Activated CD4-positive, alpha-beta memory T cell treated with anti-CD3 and anti-CD28 coated beads for 36 hours (primary cell): ENCODE measurements at regions of chr2 and their contacts with region 1.

Region 1: GRCh38 chr2:234288974-234289455 is 207.9 kb downstream of the ARL4C start:
- DNase-seq: peak; percentile 87
- H3K4me3 Mint-ChIP-seq: peak overlapping the region; percentile 49
- H3K27ac Mint-ChIP-seq: peak overlapping the region; percentile 95
- H3K4me1 Mint-ChIP-seq: peaks cover 65% of the 10 kb centered on the region
- H3K27me3 Mint-ChIP-seq: no peaks in the 10 kb centered on the region

Region 2: GRCh38 chr2:234135720-234136221 is 153.2 kb before region 1 on chr2:
- CTCF ChIA-PET with region 1: interaction called, 29 read pairs
- POLR2A ChIA-PET with region 1: no interaction called
- intact Hi-C with region 1: loop called (anchors 2 kb)
- DNase-seq: peak; percentile 70
- H3K4me3 Mint-ChIP-seq: no peak overlapping the region
- H3K27ac Mint-ChIP-seq: no peak overlapping the region
- H3K4me1 Mint-ChIP-seq: peaks cover 22% of the 10 kb centered on the region
- H3K27me3 Mint-ChIP-seq: no peaks in the 10 kb centered on the region

Region 3: DNA sequence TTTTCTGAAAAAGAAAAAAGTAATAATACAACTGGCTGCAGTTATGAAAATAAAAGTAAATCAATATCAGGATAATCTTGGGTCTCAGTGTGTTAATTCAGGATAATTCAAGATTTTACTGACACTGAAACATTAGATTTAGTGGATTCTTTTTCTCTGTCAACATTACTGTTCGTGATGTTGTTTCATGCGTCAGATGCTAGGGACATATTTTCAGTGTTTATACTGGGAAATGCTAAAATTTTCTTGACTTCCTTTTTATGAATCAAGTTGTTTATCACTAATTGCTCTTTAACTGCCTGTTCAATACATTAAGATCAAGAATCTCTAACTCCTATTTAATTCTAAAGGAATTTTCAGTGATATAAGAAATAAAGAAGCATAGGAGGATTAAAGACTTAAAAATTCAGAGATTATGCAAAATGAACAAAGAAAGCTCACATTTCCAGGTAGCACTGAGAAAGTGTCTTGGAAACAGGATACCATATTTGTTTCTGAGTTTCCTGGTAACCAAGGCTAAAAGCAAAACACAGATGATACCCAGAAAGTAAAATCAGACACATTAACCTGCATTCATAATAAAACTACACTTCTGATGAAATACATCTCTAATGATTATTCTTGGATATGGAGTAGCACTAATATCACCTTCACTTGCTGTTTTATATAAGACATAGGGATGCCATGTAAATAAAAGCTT is 33.9 kb after region 1 on chr2:
- CTCF ChIA-PET with region 1: no interaction called
- POLR2A ChIA-PET with region 1: no interaction called
- intact Hi-C with region 1: loop called (anchors 1 kb)
- DNase-seq: no peak
- H3K4me3 Mint-ChIP-seq: no peak overlapping the region
- H3K27ac Mint-ChIP-seq: peak overlapping the region; percentile 60
- H3K4me1 Mint-ChIP-seq: peaks cover 32% of the 10 kb centered on the region
- H3K27me3 Mint-ChIP-seq: no peaks in the 10 kb centered on the region

Region 4: DNA sequence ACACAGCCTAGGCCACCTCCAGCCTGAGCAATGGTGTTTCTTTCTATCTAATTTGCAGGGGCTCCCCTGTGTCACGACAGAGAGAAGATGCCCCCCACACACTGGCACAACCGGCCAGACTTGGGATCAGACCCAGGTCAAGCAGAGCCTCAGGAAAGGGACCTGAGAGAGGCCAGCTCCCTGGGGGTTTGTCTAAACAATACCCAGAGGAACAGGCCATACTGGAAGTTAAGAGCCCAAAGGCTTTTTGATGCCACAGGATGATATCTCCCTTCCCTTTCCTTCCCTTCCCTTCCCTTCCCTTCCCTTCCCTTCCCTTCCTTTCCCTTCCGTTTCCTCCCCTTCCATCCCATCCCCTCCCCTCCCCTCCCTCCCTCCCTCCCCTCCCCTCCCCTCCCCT is 68.6 kb after region 1 on chr2:
- CTCF ChIA-PET with region 1: no interaction called
- POLR2A ChIA-PET with region 1: no interaction called
- intact Hi-C with region 1: no loop called
- DNase-seq: no peak
- H3K4me3 Mint-ChIP-seq: no peak overlapping the region
- H3K27ac Mint-ChIP-seq: no peak overlapping the region
- H3K4me1 Mint-ChIP-seq: peaks cover 11% of the 10 kb centered on the region
- H3K27me3 Mint-ChIP-seq: no peaks in the 10 kb centered on the region

Region 5: GRCh38 chr2:234446404-234447076 is 157.5 kb after region 1 on chr2:
- CTCF ChIA-PET with region 1: interaction called, 8 read pairs
- POLR2A ChIA-PET with region 1: interaction called, 7 read pairs
- intact Hi-C with region 1: loop called (anchors 1 kb)
- DNase-seq: peak; percentile 89
- H3K4me3 Mint-ChIP-seq: peak overlapping the region; percentile 66
- H3K27ac Mint-ChIP-seq: peak overlapping the region; percentile 95
- H3K4me1 Mint-ChIP-seq: peaks cover 73% of the 10 kb centered on the region
- H3K27me3 Mint-ChIP-seq: no peaks in the 10 kb centered on the region

Region 6: DNA sequence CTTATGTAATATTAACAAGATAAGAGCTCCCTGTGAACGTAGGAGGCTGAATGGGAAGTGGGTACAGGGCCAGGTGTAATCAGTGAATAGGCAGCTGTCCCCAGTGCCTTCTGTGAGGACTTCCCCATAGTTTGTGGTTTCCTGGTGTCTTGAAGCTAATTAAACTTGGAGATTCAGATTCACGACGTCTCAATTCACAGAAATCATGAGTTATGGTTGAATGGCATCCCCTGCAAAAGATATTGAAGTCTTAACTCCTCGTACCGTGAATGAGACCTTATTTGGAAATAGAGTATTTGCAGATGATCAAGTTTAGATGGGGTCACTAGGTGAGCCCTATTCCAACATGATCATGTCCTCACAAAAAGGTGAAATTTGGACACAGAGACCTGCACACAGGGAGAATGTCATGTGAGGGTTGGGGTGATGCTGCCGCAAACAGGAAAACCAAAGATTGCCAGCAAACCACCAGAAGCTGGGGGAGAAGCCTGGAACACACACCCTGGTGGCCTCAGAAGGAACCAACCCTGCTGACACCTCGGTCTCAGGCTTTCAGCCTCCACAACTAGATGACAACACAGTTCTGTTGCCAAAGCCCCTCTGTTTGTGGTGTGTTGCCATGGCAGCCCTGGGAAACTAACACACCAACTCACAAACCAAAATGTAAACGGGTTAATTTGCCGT is 194.7 kb after region 1 on chr2:
- CTCF ChIA-PET with region 1: interaction called, 11 read pairs
- POLR2A ChIA-PET with region 1: interaction called, 11 read pairs
- intact Hi-C with region 1: loop called (anchors 1 kb)
- DNase-seq: peak; percentile 90
- H3K4me3 Mint-ChIP-seq: peak overlapping the region; percentile 49
- H3K27ac Mint-ChIP-seq: peak overlapping the region; percentile 88
- H3K4me1 Mint-ChIP-seq: peaks cover 90% of the 10 kb centered on the region
- H3K27me3 Mint-ChIP-seq: no peaks in the 10 kb centered on the region

Region 7: GRCh38 chr2:234544659-234545611 is 255.9 kb after region 1 on chr2:
- CTCF ChIA-PET with region 1: interaction called, 10 read pairs
- POLR2A ChIA-PET with region 1: no interaction called
- intact Hi-C with region 1: no loop called
- DNase-seq: peak; percentile 85
- H3K4me3 Mint-ChIP-seq: no peak overlapping the region
- H3K27ac Mint-ChIP-seq: no peak overlapping the region
- H3K4me1 Mint-ChIP-seq: no peaks in the 10 kb centered on the region
- H3K27me3 Mint-ChIP-seq: peaks cover 4% of the 10 kb centered on the region